Pancreas (tissue), 10 donors: ENCODE measurements at regions of chr5 and their contacts with region 1.

Region 1: GRCh38 chr5:36882250-36882649 is 5.7 kb downstream of the NIPBL start:
- DNase-seq: no peak
- ATAC-seq: no peak
- H3K4me3 ChIP-seq: no peak overlapping the region
- H3K27ac ChIP-seq: no peak overlapping the region
- H3K4me1 ChIP-seq: peaks cover 35 to 61% (median 56%) of the 10 kb centered on the region in 3 donors
- H3K27me3 ChIP-seq: no peaks in the 10 kb centered on the region
- CTCF ChIP-seq: no peak

Region 2: DNA sequence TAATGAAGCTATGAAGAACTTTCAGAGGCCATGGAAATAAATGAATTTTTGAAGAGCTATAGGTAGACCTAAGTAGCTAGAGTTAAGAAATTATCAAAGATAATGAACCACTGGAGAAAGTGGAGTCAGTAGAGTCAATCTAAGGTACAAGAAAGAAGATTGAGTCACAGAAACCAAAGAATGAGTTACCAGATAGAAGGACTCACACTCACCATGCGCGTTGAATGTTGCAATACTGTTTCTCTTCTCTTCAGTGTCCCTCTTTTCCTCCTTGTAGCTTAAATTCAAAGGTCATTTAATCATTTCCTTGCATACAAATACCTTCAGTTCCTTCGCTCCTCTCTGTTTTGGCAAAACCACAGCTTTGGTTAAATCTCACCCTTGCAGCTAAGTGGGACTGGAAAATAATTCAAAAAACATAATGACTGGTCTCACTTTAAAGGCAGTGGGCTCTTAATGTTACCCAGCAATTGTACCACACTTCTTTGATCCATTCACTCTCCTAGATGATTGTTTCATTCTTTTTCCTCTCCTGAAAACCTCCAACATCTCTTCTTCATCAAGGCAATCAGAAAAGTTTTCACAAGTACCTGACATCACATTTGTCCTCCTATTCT is 52.6 kb after region 1 on chr5:
- intact Hi-C with region 1: loop called in 1 of 3 experiments (anchors 10 kb)
- DNase-seq: no peak
- ATAC-seq: no peak
- H3K4me3 ChIP-seq: no peak overlapping the region
- H3K27ac ChIP-seq: no peak overlapping the region
- H3K4me1 ChIP-seq: peaks cover 3 to 22% (median 16%) of the 10 kb centered on the region in 3 donors
- H3K27me3 ChIP-seq: no peaks in the 10 kb centered on the region
- CTCF ChIP-seq: no peak

Region 3: DNA sequence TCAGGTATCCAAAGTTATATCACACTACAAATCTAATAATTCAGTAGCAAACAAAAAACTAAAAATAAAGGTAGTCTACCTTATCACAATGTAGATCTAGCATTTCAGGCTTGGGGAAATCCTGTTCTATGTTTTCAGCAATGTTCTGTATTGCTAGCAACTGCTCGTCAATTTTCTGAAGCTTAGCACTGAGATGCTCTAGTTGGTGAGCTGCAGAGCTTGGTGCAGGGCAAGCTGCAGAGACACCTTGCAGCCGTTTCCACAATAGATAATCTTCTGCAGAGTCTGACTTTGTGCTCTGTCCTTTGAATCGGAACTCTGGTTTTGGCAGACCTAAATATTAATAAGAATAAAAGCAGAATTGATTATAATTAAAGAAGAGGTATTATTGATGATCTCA is 271.4 kb after region 1 on chr5:
- intact Hi-C with region 1: no loop called
- DNase-seq: no peak
- ATAC-seq: no peak
- H3K4me3 ChIP-seq: no peak overlapping the region
- H3K27ac ChIP-seq: no peak overlapping the region
- H3K4me1 ChIP-seq: no peaks in the 10 kb centered on the region
- H3K27me3 ChIP-seq: no peaks in the 10 kb centered on the region
- CTCF ChIP-seq: no peak

Region 4: DNA sequence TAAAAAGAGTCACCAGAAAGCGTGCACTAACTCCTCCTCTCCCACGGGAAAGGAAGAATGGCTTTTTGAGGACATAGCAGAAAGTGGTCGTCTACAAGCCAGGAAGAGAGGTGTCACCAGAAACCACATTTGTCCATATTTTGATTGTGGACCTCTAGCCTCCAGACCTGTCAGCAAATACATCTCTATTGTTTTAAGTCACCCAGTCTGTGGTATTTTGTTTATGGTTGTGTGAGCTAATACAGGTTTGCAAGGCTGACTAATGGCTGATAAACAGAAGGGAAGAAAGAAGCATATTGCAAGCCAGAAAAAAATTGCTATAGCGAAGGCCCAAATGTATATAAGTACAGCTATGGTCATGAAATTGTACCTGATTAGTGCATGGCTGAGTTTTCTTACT is 518.3 kb after region 1 on chr5:
- intact Hi-C with region 1: no loop called
- DNase-seq: no peak
- ATAC-seq: no peak
- H3K4me3 ChIP-seq: no peak overlapping the region
- H3K27ac ChIP-seq: no peak overlapping the region
- H3K4me1 ChIP-seq: no peaks in the 10 kb centered on the region
- H3K27me3 ChIP-seq: no peaks in the 10 kb centered on the region
- CTCF ChIP-seq: no peak